ENCODE measurements at regions of chr14 and their contacts with region 1.

Region 1: DNA sequence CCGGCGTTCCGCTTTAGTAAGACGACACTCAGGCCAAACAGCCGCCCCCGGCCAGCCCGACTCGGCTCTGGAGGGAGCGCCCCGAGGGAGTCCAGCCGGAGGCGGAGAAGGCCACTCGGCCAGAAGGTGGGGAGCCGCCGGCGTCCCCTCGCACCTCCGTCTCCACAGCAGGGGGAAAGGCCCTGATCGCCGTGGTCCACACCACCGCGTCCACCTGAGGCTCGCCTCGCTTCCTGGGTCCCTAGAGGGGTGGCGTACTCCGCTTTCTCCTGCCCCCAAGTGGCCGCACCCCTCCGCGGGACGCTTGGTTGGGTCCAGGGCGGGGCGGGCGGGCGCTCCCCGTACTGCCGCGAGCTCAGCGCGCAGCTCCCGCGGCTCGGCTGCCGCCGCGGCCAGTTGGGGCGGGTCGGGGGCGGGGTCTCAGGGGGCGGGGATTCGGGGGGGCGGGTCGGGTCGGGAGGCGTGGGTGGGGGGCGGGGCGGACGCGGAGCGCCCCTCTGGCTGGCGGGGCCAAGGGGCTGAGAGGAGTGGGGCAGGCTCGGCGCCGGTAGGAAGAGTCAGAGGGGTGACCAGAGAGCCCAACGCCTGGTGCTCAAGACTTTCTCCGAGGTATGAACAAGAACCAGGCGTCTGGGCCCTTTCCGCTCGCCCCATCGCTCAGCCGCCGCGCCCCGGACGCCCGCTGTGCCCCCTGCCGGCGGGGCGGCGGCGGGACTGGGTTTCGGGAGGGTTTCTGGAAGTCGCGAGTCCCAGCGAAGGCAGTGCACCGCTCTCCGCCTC is at the start of gene FRMD6:
- DNase-seq: peak; percentile 90
- H3K4me3 ChIP-seq: peak within 1 kb of the TSS; percentile 95
- H3K27ac ChIP-seq: peak within 1 kb of the TSS; percentile 91
- H3K4me1 ChIP-seq: peaks cover 57% of the 10 kb centered on the region
- H3K27me3 ChIP-seq: no peaks in the 10 kb centered on the region
- CTCF ChIP-seq: peak; percentile 89
- total RNA-seq, gene FRMD6: 7.7 TPM

Region 2: DNA sequence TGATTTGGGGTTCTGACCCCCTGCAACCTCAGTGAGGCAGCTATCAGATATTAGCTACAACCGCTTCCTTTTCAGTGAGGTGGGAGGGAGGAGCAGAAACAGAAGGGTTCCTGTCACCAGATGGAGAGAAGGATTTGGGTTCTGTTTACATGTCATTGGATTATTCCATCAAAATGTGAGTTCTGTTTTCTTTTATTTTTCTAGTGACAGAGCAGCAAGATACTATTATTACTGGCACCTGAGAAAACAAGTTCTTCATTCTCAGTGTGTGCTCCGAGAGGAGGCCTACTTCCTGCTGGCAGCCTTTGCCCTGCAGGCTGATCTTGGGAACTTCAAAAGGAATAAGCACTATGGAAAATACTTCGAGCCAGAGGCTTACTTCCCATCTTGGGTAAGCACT is 53.0 kb after region 1 on chr14:
- intact Hi-C with region 1: loop called (anchors 10 kb)
- DNase-seq: no peak
- H3K4me3 ChIP-seq: no peak overlapping the region
- H3K27ac ChIP-seq: no peak overlapping the region
- H3K4me1 ChIP-seq: no peaks in the 10 kb centered on the region
- H3K27me3 ChIP-seq: no peaks in the 10 kb centered on the region
- CTCF ChIP-seq: no peak